Head of caudate nucleus (tissue), 42 donors: ENCODE measurements at regions of chr12 and their contacts with region 1.

Region 1: GRCh38 chr12:32659908-32660440 is 19.1 kb upstream of the DNM1L start:
- DNase-seq: no peak

Region 2: GRCh38 chr12:32365473-32366064 is 294.4 kb before region 1 on chr12:
- intact Hi-C with region 1: loop called (anchors 10 kb)
- DNase-seq: peak in 40 of 42 donors; percentile 10 to 85 (median 59)

Region 3: GRCh38 chr12:32455607-32456071 is 204.3 kb before region 1 on chr12:
- intact Hi-C with region 1: loop called (anchors 5 kb)
- DNase-seq: peak in 11 of 42 donors; percentile 15 to 73 (median 53)